HepG2 (cell line): ENCODE measurements at regions of chr13 and their contacts with region 1.

Region 1: GRCh38 chr13:43786773-43787517 is at the start of gene ENOX1:
- DNase-seq: no peak
- ATAC-seq: peak; percentile 92
- H3K4me3 ChIP-seq: peak within 1 kb of the TSS; percentile 42 to 64 (median 50); a peak in 4 of 6 replicates
- H3K27ac ChIP-seq: no peak within 1 kb of the TSS
- H3K4me1 ChIP-seq: peaks cover 7% of the 10 kb centered on the region; the same call in 1 of the 2 replicates
- H3K27me3 ChIP-seq: peaks cover 2 to 42% of the 10 kb centered on the region in 2 experiments; a peak in 4 of 5 replicates
- CTCF ChIP-seq: peak; percentile 7; the same call in 1 of the 2 replicates
- EP300 ChIP-seq: no peak
- POLR2A ChIP-seq: no peak
- RAD21 ChIP-seq: no peak
- total RNA-seq, gene ENOX1: not detected in 2 replicates

Region 2: DNA sequence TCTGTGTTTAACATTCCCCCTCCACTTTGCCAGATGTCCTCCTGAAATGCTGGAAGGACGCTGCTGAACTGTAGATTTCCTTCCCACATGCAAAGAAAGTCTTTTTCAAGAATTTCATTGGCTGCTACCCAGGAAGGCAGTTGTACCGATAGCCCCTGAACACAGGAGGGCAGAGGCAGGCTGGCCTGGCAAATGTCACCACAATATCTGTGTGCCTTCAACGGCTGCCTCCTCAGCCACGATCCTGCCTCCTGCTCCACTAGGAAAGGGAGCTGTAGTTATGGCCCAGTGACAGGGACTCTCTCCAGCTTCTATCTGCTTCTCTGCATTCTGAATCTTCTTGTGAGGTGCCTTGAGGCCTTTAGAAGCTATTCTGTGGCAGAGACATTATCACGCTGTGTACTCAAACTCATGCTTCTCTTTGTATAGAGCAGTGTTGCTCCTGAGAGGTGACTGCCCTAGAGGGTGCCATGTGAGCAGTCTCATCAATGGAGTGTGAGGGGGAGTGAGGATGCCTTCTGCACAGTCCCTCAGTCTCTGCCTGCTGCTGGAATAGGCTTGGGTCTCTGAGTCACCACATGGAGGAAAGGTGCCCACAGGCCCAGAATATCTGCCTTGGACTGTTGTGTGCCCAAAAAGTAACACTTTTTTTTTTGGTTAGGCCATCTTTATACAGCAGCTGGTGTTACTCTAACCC is 483.8 kb before region 1 on chr13:
- CTCF ChIA-PET with region 1: no interaction called
- POLR2A ChIA-PET with region 1: no interaction called
- in situ Hi-C with region 1: loop called (anchors 25 kb)
- intact Hi-C with region 1: no loop called
- DNase-seq: peak; percentile 12
- ATAC-seq: peak; percentile 73
- H3K4me3 ChIP-seq: no peak overlapping the region
- H3K27ac ChIP-seq: no peak overlapping the region
- H3K4me1 ChIP-seq: peaks cover 9% of the 10 kb centered on the region
- H3K27me3 ChIP-seq: peaks cover 0 to 1% of the 10 kb centered on the region in 2 experiments; a peak in 1 of 5 replicates
- CTCF ChIP-seq: peak; percentile 40
- EP300 ChIP-seq: no peak
- POLR2A ChIP-seq: no peak
- RAD21 ChIP-seq: no peak

Region 3: DNA sequence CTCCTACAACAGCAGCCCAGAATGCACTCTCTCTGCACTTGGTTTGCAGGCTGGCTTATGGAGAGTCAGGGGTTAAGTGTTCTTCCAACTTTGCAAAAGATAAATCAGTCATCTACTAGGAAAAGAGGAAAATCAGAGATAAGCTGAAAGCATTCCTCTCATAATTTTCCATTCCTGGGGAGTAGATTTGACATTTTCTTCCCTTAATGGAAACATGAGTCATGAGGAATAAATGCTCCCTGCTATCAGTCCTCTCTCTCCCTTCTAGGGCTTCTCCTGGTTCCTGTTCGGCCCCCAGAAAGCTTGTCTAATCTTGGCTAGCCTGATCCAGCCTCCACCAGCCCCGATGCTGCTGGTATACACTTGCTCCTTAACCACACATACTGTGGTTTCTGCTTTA is 28.3 kb after region 1 on chr13:
- CTCF ChIA-PET with region 1: no interaction called
- POLR2A ChIA-PET with region 1: no interaction called
- in situ Hi-C with region 1: no loop called
- intact Hi-C with region 1: no loop called
- DNase-seq: no peak
- ATAC-seq: no peak
- H3K4me3 ChIP-seq: no peak overlapping the region
- H3K27ac ChIP-seq: no peak overlapping the region
- H3K4me1 ChIP-seq: no peaks in the 10 kb centered on the region
- H3K27me3 ChIP-seq: no peaks in the 10 kb centered on the region; a peak in 1 of 5 replicates
- CTCF ChIP-seq: no peak
- EP300 ChIP-seq: no peak
- POLR2A ChIP-seq: no peak
- RAD21 ChIP-seq: no peak